MCF 10A (cell line): ENCODE measurements at regions of chr2 and their contacts with region 1.

Region 1: GRCh38 chr2:125745514-125745913 is 910.4 kb upstream of the GYPC start:
- DNase-seq: peak; percentile 67
- H3K4me3 Mint-ChIP-seq: no peak overlapping the region
- H3K27ac Mint-ChIP-seq: no peak overlapping the region
- H3K4me1 Mint-ChIP-seq: peaks cover 11% of the 10 kb centered on the region
- H3K27me3 Mint-ChIP-seq: no peaks in the 10 kb centered on the region
- CTCF ChIP-seq: peak; percentile 55

Region 2: DNA sequence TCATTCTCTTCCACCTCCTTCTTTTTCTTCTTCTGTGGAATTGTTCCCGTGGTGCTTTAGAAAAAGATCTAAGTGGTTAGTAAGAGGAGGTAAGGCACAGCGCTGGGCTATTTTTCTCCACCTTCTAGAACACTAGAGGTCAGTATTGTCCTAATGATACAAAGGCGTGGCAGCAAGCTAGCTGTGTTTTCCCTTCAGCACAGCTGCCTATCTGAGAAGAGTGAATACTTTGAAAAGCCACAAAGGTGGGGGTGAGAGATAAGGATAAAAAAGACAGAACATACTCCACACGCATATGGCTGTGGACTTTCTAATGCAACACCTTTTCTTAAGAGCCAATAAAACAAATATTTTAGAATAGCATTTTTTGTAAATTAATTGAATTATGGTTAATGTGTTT is 1718.3 kb before region 1 on chr2:
- CTCF ChIA-PET with region 1: no interaction called
- POLR2A ChIA-PET with region 1: no interaction called
- intact Hi-C with region 1: loop called (anchors 10 kb)
- DNase-seq: peak; percentile 73
- H3K4me3 Mint-ChIP-seq: no peak overlapping the region
- H3K27ac Mint-ChIP-seq: no peak overlapping the region
- H3K4me1 Mint-ChIP-seq: peaks cover 12% of the 10 kb centered on the region
- H3K27me3 Mint-ChIP-seq: no peaks in the 10 kb centered on the region
- CTCF ChIP-seq: peak; percentile 67

Region 3: GRCh38 chr2:126172785-126173184 is 427.3 kb after region 1 on chr2:
- CTCF ChIA-PET with region 1: no interaction called
- POLR2A ChIA-PET with region 1: no interaction called
- intact Hi-C with region 1: no loop called
- DNase-seq: no peak
- H3K4me3 Mint-ChIP-seq: no peak overlapping the region
- H3K27ac Mint-ChIP-seq: no peak overlapping the region
- H3K4me1 Mint-ChIP-seq: no peaks in the 10 kb centered on the region
- H3K27me3 Mint-ChIP-seq: no peaks in the 10 kb centered on the region
- CTCF ChIP-seq: no peak

Region 4: DNA sequence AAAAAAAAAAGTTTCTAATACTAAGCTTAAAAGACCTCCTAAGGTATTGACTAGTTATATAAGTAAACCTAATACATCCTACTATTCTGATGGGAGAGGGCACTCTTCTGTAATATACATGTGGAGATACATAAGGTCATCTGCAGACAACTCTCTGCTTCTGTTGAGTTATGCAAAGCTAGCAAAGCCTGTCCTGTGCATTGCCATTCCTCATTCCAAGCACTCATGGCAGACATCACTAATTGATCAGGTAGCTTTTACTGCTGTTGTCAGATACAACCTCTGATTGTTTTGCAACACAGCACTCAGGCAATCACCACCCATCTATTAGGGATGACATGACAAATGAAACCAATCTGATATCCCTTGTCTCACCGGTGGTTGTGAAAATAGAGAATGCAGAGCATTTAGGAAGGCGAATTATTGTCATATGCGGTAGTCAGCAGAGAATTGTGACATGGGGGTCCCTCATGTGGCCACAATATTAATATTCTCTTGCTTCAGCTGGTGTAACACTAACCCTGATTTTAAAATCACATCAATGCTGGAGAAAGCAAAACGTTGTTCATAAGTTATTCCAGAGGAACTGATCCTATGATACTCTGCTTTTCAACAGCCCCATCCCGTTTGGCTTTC is 493.9 kb after region 1 on chr2:
- CTCF ChIA-PET with region 1: no interaction called
- POLR2A ChIA-PET with region 1: no interaction called
- intact Hi-C with region 1: loop called (anchors 1 kb)
- DNase-seq: no peak
- H3K4me3 Mint-ChIP-seq: no peak overlapping the region
- H3K27ac Mint-ChIP-seq: no peak overlapping the region
- H3K4me1 Mint-ChIP-seq: no peaks in the 10 kb centered on the region
- H3K27me3 Mint-ChIP-seq: no peaks in the 10 kb centered on the region
- CTCF ChIP-seq: no peak

Region 5: DNA sequence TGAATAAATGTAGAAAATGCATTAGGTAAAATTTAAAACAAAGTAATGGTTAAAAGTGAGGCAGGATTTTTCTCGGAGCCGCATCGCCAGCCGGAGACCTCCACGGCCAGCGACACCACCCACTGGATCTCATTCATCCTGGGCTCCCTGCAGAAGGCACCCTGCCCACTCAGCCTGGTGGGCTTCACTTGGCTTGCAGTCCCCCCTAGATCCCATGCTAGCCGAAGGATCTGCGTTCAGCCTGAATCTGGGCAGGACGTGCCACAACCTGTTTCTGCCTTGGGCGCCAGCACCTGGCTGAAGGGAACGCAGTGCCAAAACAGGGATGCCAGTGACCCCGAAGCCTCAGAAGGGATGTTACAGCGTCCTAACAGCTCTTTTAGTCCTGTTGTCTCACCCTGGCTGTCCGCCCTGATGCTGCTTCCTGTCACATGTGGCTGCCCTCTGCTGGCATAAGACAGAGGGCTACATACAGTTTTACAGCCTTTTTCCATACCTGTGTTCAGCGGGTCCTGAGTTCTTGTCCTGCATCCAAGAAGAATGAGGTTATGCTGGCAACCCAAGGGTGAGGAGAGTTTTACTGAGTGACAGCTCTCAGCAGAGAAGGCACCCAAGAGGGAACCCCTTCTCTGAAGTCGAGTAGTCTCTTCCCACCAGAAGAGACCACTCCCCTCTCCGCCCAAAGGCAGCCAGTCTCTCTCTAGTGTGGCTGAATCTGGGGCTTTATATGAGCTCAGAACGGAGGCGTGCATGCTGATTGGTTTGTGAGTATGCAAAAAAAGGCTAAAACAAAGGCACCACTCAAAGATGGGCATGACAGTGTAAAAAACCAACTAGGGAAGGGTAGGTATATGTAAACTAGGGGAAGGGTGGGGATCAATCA is 737.3 kb after region 1 on chr2:
- CTCF ChIA-PET with region 1: interaction called, 4 read pairs
- POLR2A ChIA-PET with region 1: no interaction called
- intact Hi-C with region 1: loop called (anchors 2 kb)
- DNase-seq: peak; percentile 41
- H3K4me3 Mint-ChIP-seq: no peak overlapping the region
- H3K27ac Mint-ChIP-seq: no peak overlapping the region
- H3K4me1 Mint-ChIP-seq: no peaks in the 10 kb centered on the region
- H3K27me3 Mint-ChIP-seq: no peaks in the 10 kb centered on the region
- CTCF ChIP-seq: peak; percentile 14

Region 6: GRCh38 chr2:126776692-126777619 is 1031.4 kb after region 1 on chr2:
- CTCF ChIA-PET with region 1: interaction called, 68 read pairs
- POLR2A ChIA-PET with region 1: interaction called, 3 read pairs
- intact Hi-C with region 1: loop called (anchors 1 kb)
- DNase-seq: peak; percentile 55
- H3K4me3 Mint-ChIP-seq: peak overlapping the region; percentile 71
- H3K27ac Mint-ChIP-seq: no peak overlapping the region
- H3K4me1 Mint-ChIP-seq: peaks cover 6% of the 10 kb centered on the region
- H3K27me3 Mint-ChIP-seq: peaks cover 57% of the 10 kb centered on the region
- CTCF ChIP-seq: peak; percentile 78

Region 7: GRCh38 chr2:127049927-127050802 is 1304.7 kb after region 1 on chr2:
- CTCF ChIA-PET with region 1: interaction called, 3 read pairs
- POLR2A ChIA-PET with region 1: no interaction called
- intact Hi-C with region 1: loop called (anchors 1 kb)
- DNase-seq: peak; percentile 53
- H3K4me3 Mint-ChIP-seq: no peak overlapping the region
- H3K27ac Mint-ChIP-seq: no peak overlapping the region
- H3K4me1 Mint-ChIP-seq: no peaks in the 10 kb centered on the region
- H3K27me3 Mint-ChIP-seq: no peaks in the 10 kb centered on the region
- CTCF ChIP-seq: peak; percentile 98